AG04450 (cell line): ENCODE measurements at regions of chr2 and their contacts with region 1.

Region 1: GRCh38 chr2:157204401-157204800 is 53.1 kb upstream of the GALNT5 start:
- DNase-seq: no peak
- H3K4me3 ChIP-seq: no peak overlapping the region
- H3K27ac ChIP-seq: no peak overlapping the region
- H3K27me3 ChIP-seq: no peaks in the 10 kb centered on the region
- CTCF ChIP-seq: no peak

Region 2: GRCh38 chr2:157093666-157094065 is 110.7 kb before region 1 on chr2:
- CTCF ChIA-PET with region 1: no interaction called
- POLR2A ChIA-PET with region 1: no interaction called
- DNase-seq: no peak
- H3K4me3 ChIP-seq: no peak overlapping the region
- H3K27ac ChIP-seq: no peak overlapping the region
- H3K27me3 ChIP-seq: no peaks in the 10 kb centered on the region
- CTCF ChIP-seq: no peak

Region 3: GRCh38 chr2:157182834-157183396 is 21.5 kb before region 1 on chr2:
- CTCF ChIA-PET with region 1: interaction called, 10 read pairs
- POLR2A ChIA-PET with region 1: no interaction called
- DNase-seq: peak; percentile 85
- H3K4me3 ChIP-seq: no peak overlapping the region
- H3K27ac ChIP-seq: peak overlapping the region; percentile 92
- H3K27me3 ChIP-seq: no peaks in the 10 kb centered on the region
- CTCF ChIP-seq: no peak

Region 4: DNA sequence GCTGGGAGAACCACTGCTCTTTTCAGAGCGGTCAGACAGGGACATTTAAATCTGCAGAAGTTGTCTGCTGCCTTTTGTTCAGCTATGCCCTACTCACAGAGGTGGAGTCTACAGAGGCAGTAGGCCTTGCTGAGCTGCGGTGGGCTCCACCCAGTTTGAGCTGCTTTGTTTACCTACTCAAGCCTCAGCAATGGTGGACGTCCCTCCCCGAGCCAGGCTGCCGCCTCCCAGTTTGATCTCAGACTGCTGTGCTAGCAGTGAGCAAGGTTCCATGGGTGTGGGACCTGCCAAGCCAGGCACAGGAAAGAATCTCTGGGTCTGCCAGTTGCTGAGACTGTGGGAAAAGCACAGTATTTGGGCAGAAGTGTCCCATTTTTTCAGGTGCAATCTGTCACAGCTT is 74.9 kb after region 1 on chr2:
- CTCF ChIA-PET with region 1: no interaction called
- POLR2A ChIA-PET with region 1: no interaction called
- DNase-seq: no peak
- H3K4me3 ChIP-seq: no peak overlapping the region
- H3K27ac ChIP-seq: no peak overlapping the region
- H3K27me3 ChIP-seq: no peaks in the 10 kb centered on the region
- CTCF ChIP-seq: no peak